Caco-2 (cell line): ENCODE measurements at regions of chr1 and their contacts with region 1.

Region 1: DNA sequence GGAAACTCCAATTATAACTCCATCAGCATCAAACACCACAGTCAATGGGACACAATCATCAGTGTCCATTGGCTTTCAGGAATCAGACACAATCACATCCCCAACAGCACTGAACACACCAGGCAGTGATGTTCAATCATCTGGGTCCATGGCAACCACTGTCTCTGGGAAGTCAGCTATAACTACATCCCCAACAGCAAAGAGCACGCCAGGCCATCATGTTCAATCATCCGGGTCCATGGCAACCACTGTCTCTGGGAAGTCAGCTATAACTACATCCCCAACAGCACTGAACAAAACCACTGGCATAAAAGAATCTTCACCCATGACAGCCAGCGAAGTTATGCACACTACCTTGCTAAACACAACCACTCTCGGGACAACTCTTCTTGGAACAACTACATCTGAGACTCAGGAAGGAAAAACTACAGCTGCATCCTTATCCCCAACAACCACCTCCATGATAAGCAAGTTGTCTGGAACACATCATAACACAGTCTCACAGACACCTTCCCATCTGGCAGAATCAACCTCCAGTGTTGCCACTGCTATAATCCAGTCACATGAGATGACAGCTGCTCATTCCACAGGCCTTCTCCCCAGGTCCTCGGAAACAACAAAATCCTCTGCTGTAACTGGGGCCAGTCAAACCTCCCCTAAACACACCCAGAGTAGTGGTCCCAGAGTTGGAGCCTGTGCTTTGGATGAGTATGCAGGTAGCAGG is 19.9 kb downstream of the CATSPER4 start:
- DNase-seq: no peak
- H3K4me3 ChIP-seq: no peak overlapping the region
- H3K4me3 Mint-ChIP-seq: no peak overlapping the region
- H3K27ac Mint-ChIP-seq: no peak overlapping the region
- H3K4me1 ChIP-seq: no peaks in the 10 kb centered on the region
- H3K4me1 Mint-ChIP-seq: no peaks in the 10 kb centered on the region
- H3K27me3 ChIP-seq: no peaks in the 10 kb centered on the region
- H3K27me3 Mint-ChIP-seq: peaks cover 5% of the 10 kb centered on the region
- CTCF ChIP-seq: no peak

Region 2: GRCh38 chr1:25780311-25781129 is 429.8 kb before region 1 on chr1:
- CTCF ChIA-PET with region 1: no interaction called
- POLR2A ChIA-PET with region 1: interaction called, 16 read pairs
- intact Hi-C with region 1: no loop called
- DNase-seq: no peak
- H3K4me3 ChIP-seq: no peak overlapping the region
- H3K4me3 Mint-ChIP-seq: no peak overlapping the region
- H3K27ac Mint-ChIP-seq: no peak overlapping the region
- H3K4me1 ChIP-seq: peaks cover 20% of the 10 kb centered on the region
- H3K4me1 Mint-ChIP-seq: peaks cover 8% of the 10 kb centered on the region
- H3K27me3 ChIP-seq: no peaks in the 10 kb centered on the region
- H3K27me3 Mint-ChIP-seq: no peaks in the 10 kb centered on the region
- CTCF ChIP-seq: no peak

Region 3: GRCh38 chr1:26378088-26378878 is 168.0 kb after region 1 on chr1:
- CTCF ChIA-PET with region 1: no interaction called
- POLR2A ChIA-PET with region 1: no interaction called
- intact Hi-C with region 1: no loop called
- DNase-seq: no peak
- H3K4me3 ChIP-seq: no peak overlapping the region
- H3K4me3 Mint-ChIP-seq: no peak overlapping the region
- H3K27ac Mint-ChIP-seq: no peak overlapping the region
- H3K4me1 ChIP-seq: no peaks in the 10 kb centered on the region; the same call in 1 of the 2 replicates
- H3K4me1 Mint-ChIP-seq: peaks cover 6% of the 10 kb centered on the region
- H3K27me3 ChIP-seq: no peaks in the 10 kb centered on the region
- H3K27me3 Mint-ChIP-seq: no peaks in the 10 kb centered on the region
- CTCF ChIP-seq: no peak